Caco-2 (cell line): ENCODE measurements at regions of chr18 and their contacts with region 1.

Region 1: GRCh38 chr18:33231474-33232317 is 208.8 kb downstream of the CCDC178 start:
- DNase-seq: peak; percentile 56 to 62
- H3K4me3 ChIP-seq: no peak overlapping the region
- H3K4me3 Mint-ChIP-seq: no peak overlapping the region
- H3K27ac Mint-ChIP-seq: no peak overlapping the region
- H3K4me1 ChIP-seq: no peaks in the 10 kb centered on the region
- H3K4me1 Mint-ChIP-seq: no peaks in the 10 kb centered on the region
- H3K27me3 ChIP-seq: no peaks in the 10 kb centered on the region
- H3K27me3 Mint-ChIP-seq: no peaks in the 10 kb centered on the region
- CTCF ChIP-seq: peak; percentile 56 to 63

Region 2: GRCh38 chr18:33495278-33495677 is 263.6 kb after region 1 on chr18:
- CTCF ChIA-PET with region 1: no interaction called
- POLR2A ChIA-PET with region 1: no interaction called
- intact Hi-C with region 1: loop called (anchors 1 kb)
- DNase-seq: peak in 1 of 2 experiments; percentile 6
- H3K4me3 ChIP-seq: no peak overlapping the region
- H3K4me3 Mint-ChIP-seq: no peak overlapping the region
- H3K27ac Mint-ChIP-seq: no peak overlapping the region
- H3K4me1 ChIP-seq: no peaks in the 10 kb centered on the region
- H3K4me1 Mint-ChIP-seq: no peaks in the 10 kb centered on the region
- H3K27me3 ChIP-seq: no peaks in the 10 kb centered on the region
- H3K27me3 Mint-ChIP-seq: no peaks in the 10 kb centered on the region
- CTCF ChIP-seq: peak in 1 of 2 experiments; percentile 9

Region 3: GRCh38 chr18:33761363-33761762 is 529.7 kb after region 1 on chr18:
- CTCF ChIA-PET with region 1: interaction called, 8 read pairs
- POLR2A ChIA-PET with region 1: no interaction called
- intact Hi-C with region 1: loop called (anchors 10 kb)
- DNase-seq: no peak
- H3K4me3 ChIP-seq: no peak overlapping the region
- H3K4me3 Mint-ChIP-seq: no peak overlapping the region
- H3K27ac Mint-ChIP-seq: no peak overlapping the region
- H3K4me1 ChIP-seq: no peaks in the 10 kb centered on the region
- H3K4me1 Mint-ChIP-seq: no peaks in the 10 kb centered on the region
- H3K27me3 ChIP-seq: no peaks in the 10 kb centered on the region
- H3K27me3 Mint-ChIP-seq: no peaks in the 10 kb centered on the region
- CTCF ChIP-seq: no peak